ENCODE measurements at regions of chr17 and their contacts with region 1.

Region 1: DNA sequence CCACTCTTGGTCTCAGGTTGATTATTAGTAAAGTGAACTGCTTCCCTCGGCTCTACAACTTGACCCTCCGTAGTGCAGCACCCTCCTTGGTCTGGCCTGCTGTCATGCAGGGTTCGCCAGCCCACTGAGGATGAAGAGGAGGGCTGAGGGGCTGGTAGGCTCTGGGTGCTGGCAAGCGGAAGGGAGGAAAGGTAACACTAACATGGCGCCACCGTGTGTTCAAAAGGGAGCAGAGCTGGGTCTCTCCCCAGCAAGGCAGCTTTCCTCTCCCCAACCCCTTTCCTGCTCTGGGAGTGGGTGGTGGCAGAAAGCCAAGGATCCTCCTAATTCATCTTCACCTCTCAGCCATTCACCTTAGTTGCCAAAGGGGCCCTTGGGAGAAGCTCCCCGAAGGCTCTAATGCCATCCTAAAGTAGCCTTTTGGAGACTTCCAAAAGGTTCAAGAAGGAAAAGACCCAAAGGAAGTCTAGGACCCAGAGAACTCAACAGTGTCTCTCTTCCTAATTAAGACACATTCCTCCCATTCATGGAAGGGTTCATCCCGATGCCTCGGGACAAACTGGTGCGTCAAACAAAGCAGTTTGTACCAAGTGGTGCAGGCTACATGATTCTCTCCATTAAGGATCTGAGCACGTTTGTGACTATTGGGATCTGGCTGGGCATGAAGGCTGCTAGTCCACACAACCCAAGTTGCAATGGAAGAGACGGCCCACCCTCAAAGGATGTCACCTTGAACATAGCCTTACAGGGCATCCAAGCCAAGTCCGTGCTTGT is 90.8 kb upstream of the TOB1 start:
- DNase-seq: peak; percentile 72
- H3K4me3 ChIP-seq: no peak overlapping the region
- H3K27ac ChIP-seq: no peak overlapping the region
- H3K4me1 ChIP-seq: peaks cover 34% of the 10 kb centered on the region
- H3K27me3 ChIP-seq: no peaks in the 10 kb centered on the region
- CTCF ChIP-seq: peak; percentile 88

Region 2: DNA sequence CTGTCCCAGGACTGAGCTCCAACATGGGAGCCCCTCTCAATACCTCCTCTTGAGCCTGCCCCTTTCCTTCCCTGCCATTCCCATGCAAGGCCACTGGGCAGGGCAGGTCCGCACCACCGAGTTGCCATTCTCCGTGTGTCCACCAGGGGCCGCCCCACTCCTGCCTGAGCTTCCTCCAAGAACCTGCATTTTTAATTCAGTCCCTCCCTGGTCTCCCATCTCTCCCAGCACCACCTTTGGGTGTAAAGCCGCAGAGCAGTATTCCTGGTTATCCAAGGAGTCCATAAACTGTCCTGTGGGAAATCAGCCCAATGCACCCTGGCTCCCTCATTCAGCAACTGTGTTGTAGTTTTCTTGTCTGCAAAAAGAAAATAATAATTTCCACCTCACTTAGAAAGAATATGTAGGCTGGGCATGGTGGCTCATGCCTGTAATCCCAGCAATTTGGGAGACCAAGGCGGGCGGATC is 173.7 kb before region 1 on chr17:
- CTCF ChIA-PET with region 1: interaction called, 3 read pairs
- POLR2A ChIA-PET with region 1: no interaction called
- intact Hi-C with region 1: loop called (anchors 2 kb)
- DNase-seq: peak; percentile 90
- H3K4me3 ChIP-seq: no peak overlapping the region
- H3K27ac ChIP-seq: no peak overlapping the region
- H3K4me1 ChIP-seq: no peaks in the 10 kb centered on the region
- H3K27me3 ChIP-seq: no peaks in the 10 kb centered on the region
- CTCF ChIP-seq: peak; percentile 99

Region 3: DNA sequence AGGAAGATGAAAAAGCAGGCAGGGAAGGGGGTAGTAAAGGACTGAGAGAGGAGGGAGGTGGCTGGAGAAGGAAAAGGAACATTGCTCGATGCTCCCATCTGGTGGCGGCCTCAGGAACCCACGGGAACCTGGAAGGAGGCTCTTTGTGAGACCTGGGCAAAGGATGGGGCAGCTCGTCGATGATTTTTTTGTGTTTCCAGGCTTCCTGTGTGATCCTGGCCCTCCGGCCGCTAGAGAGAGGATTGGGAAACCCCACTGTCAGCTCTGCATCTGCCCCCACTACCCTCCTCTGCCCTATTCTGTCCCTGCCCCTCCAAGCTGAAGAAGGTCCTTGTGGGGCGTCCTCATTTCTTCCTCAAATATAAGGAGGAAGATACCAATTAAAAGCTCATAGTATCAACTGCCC is 115.0 kb before region 1 on chr17:
- CTCF ChIA-PET with region 1: no interaction called
- POLR2A ChIA-PET with region 1: no interaction called
- intact Hi-C with region 1: no loop called
- DNase-seq: peak; percentile 81
- H3K4me3 ChIP-seq: no peak overlapping the region
- H3K27ac ChIP-seq: no peak overlapping the region
- H3K4me1 ChIP-seq: no peaks in the 10 kb centered on the region
- H3K27me3 ChIP-seq: no peaks in the 10 kb centered on the region
- CTCF ChIP-seq: peak; percentile 86

Region 4: GRCh38 chr17:50853015-50853615 is 103.8 kb before region 1 on chr17:
- CTCF ChIA-PET with region 1: interaction called, 7 read pairs
- POLR2A ChIA-PET with region 1: no interaction called
- intact Hi-C with region 1: loop called (anchors 1 kb)
- DNase-seq: no peak
- H3K4me3 ChIP-seq: no peak overlapping the region
- H3K27ac ChIP-seq: no peak overlapping the region
- H3K4me1 ChIP-seq: no peaks in the 10 kb centered on the region
- H3K27me3 ChIP-seq: no peaks in the 10 kb centered on the region
- CTCF ChIP-seq: no peak

Region 5: DNA sequence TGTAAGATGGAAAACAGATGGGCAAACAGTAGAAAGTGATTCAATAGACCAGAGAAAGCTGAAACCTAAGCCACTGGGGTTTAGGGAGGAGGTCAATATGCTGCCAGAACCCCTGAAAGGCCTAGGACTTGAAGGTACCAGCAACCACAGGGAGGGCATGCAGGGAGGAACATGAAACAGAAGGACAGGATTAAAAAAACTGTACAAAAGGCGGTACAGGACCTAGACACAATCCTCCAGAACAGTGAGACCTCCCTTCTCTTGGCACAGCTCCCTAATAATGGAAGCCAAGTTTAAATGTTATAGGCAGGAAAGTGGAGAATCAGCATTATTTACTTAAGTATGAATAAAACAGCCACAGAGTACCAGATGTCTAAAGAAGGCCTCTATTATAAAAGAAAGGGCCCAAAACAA is 58.2 kb after region 1 on chr17:
- CTCF ChIA-PET with region 1: no interaction called
- POLR2A ChIA-PET with region 1: no interaction called
- intact Hi-C with region 1: loop called (anchors 5 kb)
- DNase-seq: peak; percentile 17
- H3K4me3 ChIP-seq: no peak overlapping the region
- H3K27ac ChIP-seq: no peak overlapping the region
- H3K4me1 ChIP-seq: peaks cover 3% of the 10 kb centered on the region
- H3K27me3 ChIP-seq: no peaks in the 10 kb centered on the region
- CTCF ChIP-seq: no peak

Measured in A673 (cell line).